ENCODE measurements at regions of chr3 and their contacts with region 1.

Region 1: GRCh38 chr3:75171630-75172230 is 492.4 kb upstream of the FRG2C start:
- DNase-seq: no peak
- ATAC-seq: no peak
- H3K4me3 ChIP-seq: no peak overlapping the region
- H3K27ac ChIP-seq: no peak overlapping the region
- H3K4me1 ChIP-seq: no peaks in the 10 kb centered on the region
- H3K27me3 ChIP-seq: peaks cover 0 to 13% (median 0%) of the 10 kb centered on the region in 9 donors
- CTCF ChIP-seq: peak in 8 of 12 donors; percentile 7 to 47 (median 33)
- POLR2A ChIP-seq: no peak

Region 2: DNA sequence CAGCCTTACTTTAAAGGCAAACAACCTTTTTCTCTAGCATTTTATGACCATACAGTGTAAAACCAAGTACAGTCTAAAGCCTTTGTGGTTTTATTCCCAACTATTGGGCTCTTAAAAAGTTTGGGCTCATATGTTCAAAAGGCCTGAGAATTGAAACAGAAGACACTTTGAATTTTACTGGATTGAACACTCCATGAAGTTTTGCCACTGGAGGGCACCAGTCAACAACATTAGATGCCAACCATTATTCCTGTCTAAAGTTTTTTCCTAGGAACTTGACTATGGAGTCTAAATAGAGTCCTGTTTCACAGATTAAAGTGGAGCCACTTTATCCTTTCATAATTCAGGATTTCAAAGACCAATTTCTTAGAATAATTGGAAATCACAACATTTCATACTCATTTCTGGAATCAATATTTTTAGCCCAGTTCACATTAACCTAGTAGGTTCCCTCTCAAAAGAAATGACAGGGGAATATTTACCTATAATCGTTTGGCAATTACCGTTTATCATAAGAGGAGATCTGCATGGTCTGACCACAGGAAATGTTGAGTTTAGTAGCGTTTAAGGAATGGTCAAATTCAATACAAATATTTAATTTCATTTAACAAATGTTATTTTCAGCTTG is 1302.9 kb before region 1 on chr3:
- intact Hi-C with region 1: loop called in 4 of 10 experiments (anchors 5 to 10 kb)
- DNase-seq: peak in 2 of 5 donors; percentile 19 to 26
- ATAC-seq: peak in 3 of 4 donors; percentile 33 to 57 (median 56)
- H3K4me3 ChIP-seq: no peak overlapping the region
- H3K27ac ChIP-seq: no peak overlapping the region
- H3K4me1 ChIP-seq: no peaks in the 10 kb centered on the region
- H3K27me3 ChIP-seq: no peaks in the 10 kb centered on the region
- CTCF ChIP-seq: peak; percentile 11 to 64 (median 52)
- POLR2A ChIP-seq: no peak

Region 3: DNA sequence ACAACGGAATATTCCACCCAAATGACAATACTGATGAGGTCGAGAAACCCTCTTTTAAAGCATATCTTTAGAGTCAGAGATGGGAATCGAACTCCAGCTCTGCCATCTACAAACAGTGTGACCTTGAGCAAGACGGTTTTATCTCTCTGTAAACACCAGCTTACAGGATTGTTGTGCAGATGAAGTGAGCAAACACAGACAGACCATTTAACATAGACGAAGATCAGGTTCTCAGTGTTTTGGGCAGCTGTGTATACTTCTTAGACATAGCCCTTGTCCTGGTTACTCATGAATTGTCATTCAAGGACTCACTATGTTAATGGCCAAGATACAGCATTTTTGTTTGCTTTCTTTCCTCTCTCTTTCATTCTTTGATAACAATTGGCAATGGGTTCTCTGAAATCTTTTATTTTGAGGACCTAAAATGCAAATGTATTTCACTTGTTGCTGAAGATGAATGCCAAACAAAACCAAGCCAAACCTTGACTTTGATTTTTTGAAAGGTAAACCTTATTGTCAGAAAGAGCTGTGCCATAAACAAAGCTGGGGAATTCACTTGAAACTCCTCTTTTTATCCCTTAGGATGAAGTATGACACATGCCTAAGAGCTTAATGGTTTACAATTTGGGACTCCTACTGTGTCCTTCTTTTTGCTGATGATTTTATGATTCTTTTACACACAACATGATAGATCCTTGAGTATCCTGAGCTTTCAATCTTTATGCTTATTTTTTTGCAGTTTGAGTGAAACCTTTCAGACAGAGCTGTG is 1296.9 kb before region 1 on chr3:
- intact Hi-C with region 1: loop called in 4 of 10 experiments (anchors 5 to 10 kb)
- DNase-seq: no peak
- ATAC-seq: no peak
- H3K4me3 ChIP-seq: no peak overlapping the region
- H3K27ac ChIP-seq: no peak overlapping the region
- H3K4me1 ChIP-seq: no peaks in the 10 kb centered on the region
- H3K27me3 ChIP-seq: no peaks in the 10 kb centered on the region
- CTCF ChIP-seq: no peak
- POLR2A ChIP-seq: no peak

Region 4: GRCh38 chr3:75110741-75111140 is 61.0 kb before region 1 on chr3:
- intact Hi-C with region 1: no loop called
- DNase-seq: no peak
- ATAC-seq: no peak
- H3K4me3 ChIP-seq: no peak overlapping the region
- H3K27ac ChIP-seq: no peak overlapping the region
- H3K4me1 ChIP-seq: no peaks in the 10 kb centered on the region
- H3K27me3 ChIP-seq: no peaks in the 10 kb centered on the region
- CTCF ChIP-seq: no peak
- POLR2A ChIP-seq: no peak

Measured in heart left ventricle (tissue), 16 donors.